ENCODE measurements at regions of chr19 and their contacts with region 1.

Region 1: DNA sequence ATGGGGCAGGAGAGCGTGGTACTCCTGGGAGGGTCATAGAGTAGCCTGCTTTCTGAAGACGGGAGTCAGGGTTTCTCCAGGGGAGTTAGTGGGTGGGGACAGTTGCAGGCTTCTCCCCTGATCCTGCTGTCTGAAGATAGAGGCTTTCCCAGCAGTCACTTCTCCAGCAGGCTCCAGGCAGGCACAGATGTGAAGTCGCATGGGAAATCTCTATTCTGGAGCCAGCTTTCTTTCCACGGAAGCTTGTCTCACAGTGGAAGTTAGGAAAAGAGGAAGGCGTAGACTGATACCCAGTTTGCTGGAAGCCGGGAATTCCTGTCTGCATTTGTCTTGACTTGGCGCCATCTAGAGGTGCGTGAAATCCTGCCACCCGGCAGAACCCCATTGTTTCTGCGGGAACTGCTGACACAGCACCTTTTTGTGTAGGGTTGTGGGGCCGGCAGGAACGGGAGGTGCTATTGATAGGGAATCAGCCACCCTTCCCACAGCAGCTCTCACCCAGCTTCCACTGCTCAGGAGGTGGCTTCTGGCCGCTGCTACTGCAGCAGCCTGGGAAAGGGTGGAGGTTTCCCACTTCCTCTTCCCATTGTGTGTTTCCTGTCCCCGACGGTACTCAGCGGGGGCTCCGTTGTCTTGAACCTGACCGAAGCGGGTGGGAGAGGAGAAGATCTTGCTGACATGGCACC is 28.5 kb upstream of the NPAS1 start:
- DNase-seq: peak; percentile 77 to 85
- ATAC-seq: peak; percentile 70 to 87
- H3K4me3 ChIP-seq: no peak overlapping the region
- H3K27ac ChIP-seq: peak overlapping the region; percentile 31 to 65; a peak in 3 of 6 replicates
- H3K4me1 ChIP-seq: peaks cover 9% of the 10 kb centered on the region; the same call in 2 of the 3 replicates
- CTCF ChIP-seq: peak; percentile 97
- EP300 ChIP-seq: no peak
- POLR2A ChIP-seq: no peak
- RAD21 ChIP-seq: peak; percentile 99

Region 2: DNA sequence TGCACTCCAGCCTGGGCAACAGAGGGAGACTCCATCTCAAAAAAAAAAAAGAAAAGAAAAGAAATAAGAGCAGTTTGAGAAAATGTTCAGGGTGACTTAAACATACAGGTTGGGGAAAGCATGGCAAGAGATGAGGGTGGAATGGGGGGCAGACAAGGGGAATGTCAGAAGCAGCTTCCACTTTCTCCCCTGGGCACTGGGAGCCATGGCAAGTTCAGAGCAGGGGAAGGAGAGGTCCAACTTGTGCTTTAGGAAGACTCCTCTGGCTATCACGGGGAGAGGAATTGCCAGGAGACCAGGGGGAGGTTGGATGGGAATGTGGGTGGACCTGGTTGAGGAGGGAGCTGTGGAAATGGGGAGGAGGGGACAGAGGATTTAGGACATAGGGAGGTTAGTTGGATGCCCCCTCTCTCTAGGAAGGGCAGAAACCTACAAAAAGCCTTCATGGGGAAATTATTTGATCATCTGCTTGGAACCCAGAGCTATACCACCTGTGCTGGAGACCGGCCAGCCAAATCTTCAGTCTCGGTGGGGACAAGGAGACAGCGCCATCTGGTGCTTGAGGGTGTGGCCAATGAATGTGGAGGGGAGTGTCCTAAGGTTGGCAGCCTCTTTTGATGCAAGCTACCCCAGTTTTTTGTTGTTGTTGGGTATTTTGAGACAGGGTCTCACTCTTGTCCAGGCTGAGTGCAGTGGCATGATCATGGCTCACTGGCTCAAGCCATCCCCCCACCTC is 237.5 kb before region 1 on chr19:
- CTCF ChIA-PET with region 1: interaction called, 14 read pairs
- POLR2A ChIA-PET with region 1: no interaction called
- DNase-seq: peak; percentile 64 to 79
- ATAC-seq: peak; percentile 22 to 45; a peak in 3 of 6 replicates
- H3K4me3 ChIP-seq: no peak overlapping the region
- H3K27ac ChIP-seq: no peak overlapping the region
- H3K4me1 ChIP-seq: peaks cover 4% of the 10 kb centered on the region; the same call in 1 of the 3 replicates
- CTCF ChIP-seq: peak; percentile 65
- EP300 ChIP-seq: no peak
- POLR2A ChIP-seq: no peak
- RAD21 ChIP-seq: peak in 1 of 2 experiments; percentile 46; a peak in 1 of 5 replicates

Region 3: GRCh38 chr19:46850228-46851203 is 140.6 kb before region 1 on chr19 and contains the start of gene AP2S1:
- CTCF ChIA-PET with region 1: interaction called, 339 read pairs
- POLR2A ChIA-PET with region 1: interaction called, 3 read pairs
- DNase-seq: peak; percentile 99
- ATAC-seq: peak; percentile 97 to 98
- H3K4me3 ChIP-seq: peak within 1 kb of the TSS; percentile 67
- H3K27ac ChIP-seq: peak within 1 kb of the TSS; percentile 81 to 93
- H3K4me1 ChIP-seq: peaks cover 10% of the 10 kb centered on the region
- CTCF ChIP-seq: no peak
- EP300 ChIP-seq: no peak
- POLR2A ChIP-seq: peak; percentile 79
- RAD21 ChIP-seq: 0 out of 5 replicates have a peak, but pooled peaks of 1 of the 2 experiments have one; percentile 5
- polyA plus RNA-seq, gene AP2S1: 117 and 150 TPM in 2 replicates

Region 4: GRCh38 chr19:46885411-46885810 is 105.7 kb before region 1 on chr19:
- CTCF ChIA-PET with region 1: interaction called, 47 read pairs
- POLR2A ChIA-PET with region 1: no interaction called
- DNase-seq: no peak
- ATAC-seq: no peak
- H3K4me3 ChIP-seq: no peak overlapping the region
- H3K27ac ChIP-seq: no peak overlapping the region
- H3K4me1 ChIP-seq: peaks cover 49% of the 10 kb centered on the region
- CTCF ChIP-seq: no peak
- EP300 ChIP-seq: no peak
- POLR2A ChIP-seq: no peak
- RAD21 ChIP-seq: no peak

Region 5: GRCh38 chr19:46919324-46919723 is 71.8 kb before region 1 on chr19:
- CTCF ChIA-PET with region 1: interaction called, 83 read pairs
- POLR2A ChIA-PET with region 1: no interaction called
- DNase-seq: no peak
- ATAC-seq: no peak
- H3K4me3 ChIP-seq: no peak overlapping the region
- H3K27ac ChIP-seq: no peak overlapping the region
- H3K4me1 ChIP-seq: peaks cover 39% of the 10 kb centered on the region
- CTCF ChIP-seq: no peak
- EP300 ChIP-seq: no peak
- POLR2A ChIP-seq: no peak
- RAD21 ChIP-seq: no peak

Region 6: GRCh38 chr19:46967578-46968027 is 23.5 kb before region 1 on chr19:
- CTCF ChIA-PET with region 1: interaction called, 156 read pairs
- POLR2A ChIA-PET with region 1: no interaction called
- DNase-seq: no peak
- ATAC-seq: no peak; a peak in 1 of 6 replicates
- H3K4me3 ChIP-seq: no peak overlapping the region
- H3K27ac ChIP-seq: peak overlapping the region in 1 of 2 experiments; percentile 8; a peak in 1 of 6 replicates
- H3K4me1 ChIP-seq: peaks cover 14% of the 10 kb centered on the region; the same call in 2 of the 3 replicates
- CTCF ChIP-seq: no peak
- EP300 ChIP-seq: no peak
- POLR2A ChIP-seq: no peak
- RAD21 ChIP-seq: no peak

Region 7: GRCh38 chr19:47069795-47070194 is 78.7 kb after region 1 on chr19:
- CTCF ChIA-PET with region 1: no interaction called
- POLR2A ChIA-PET with region 1: no interaction called
- DNase-seq: no peak
- ATAC-seq: no peak
- H3K4me3 ChIP-seq: no peak overlapping the region
- H3K27ac ChIP-seq: no peak overlapping the region
- H3K4me1 ChIP-seq: no peaks in the 10 kb centered on the region
- CTCF ChIP-seq: no peak
- EP300 ChIP-seq: no peak
- POLR2A ChIP-seq: no peak
- RAD21 ChIP-seq: no peak

Region 8: DNA sequence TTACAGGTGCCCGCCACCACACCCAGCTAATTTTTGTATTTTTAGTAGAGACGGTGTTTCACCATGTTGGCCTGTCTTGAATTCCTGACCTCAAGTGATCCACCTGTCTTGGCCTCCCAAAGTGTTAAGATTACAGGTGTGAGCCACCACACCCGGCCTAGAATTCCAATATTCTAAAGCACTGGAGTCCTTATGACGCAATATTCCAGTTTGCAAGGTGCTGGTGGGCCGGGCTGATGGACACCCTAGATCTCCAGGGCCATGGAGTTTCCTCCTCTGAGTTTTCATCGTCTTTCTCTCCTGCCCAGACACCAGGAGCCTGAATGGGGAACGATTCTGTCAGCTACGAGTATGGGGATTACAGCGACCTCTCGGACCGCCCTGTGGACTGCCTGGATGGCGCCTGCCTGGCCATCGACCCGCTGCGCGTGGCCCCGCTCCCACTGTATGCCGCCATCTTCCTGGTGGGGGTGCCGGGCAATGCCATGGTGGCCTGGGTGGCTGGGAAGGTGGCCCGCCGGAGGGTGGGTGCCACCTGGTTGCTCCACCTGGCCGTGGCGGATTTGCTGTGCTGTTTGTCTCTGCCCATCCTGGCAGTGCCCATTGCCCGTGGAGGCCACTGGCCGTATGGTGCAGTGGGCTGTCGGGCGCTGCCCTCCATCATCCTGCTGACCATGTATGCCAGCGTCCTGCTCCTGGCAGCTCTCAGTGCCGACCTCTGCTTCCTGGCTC is 349.5 kb after region 1 on chr19:
- CTCF ChIA-PET with region 1: no interaction called
- POLR2A ChIA-PET with region 1: no interaction called
- DNase-seq: no peak
- ATAC-seq: peak in 1 of 2 experiments; percentile 8; a peak in 1 of 6 replicates
- H3K4me3 ChIP-seq: no peak overlapping the region
- H3K27ac ChIP-seq: no peak overlapping the region
- H3K4me1 ChIP-seq: peaks cover 10% of the 10 kb centered on the region; the same call in 2 of the 3 replicates
- CTCF ChIP-seq: no peak
- EP300 ChIP-seq: no peak
- POLR2A ChIP-seq: no peak
- RAD21 ChIP-seq: no peak